Activated B cell treated with CpG ODN at 0.5 μM for 24 hours (primary cell): ENCODE measurements at regions of chr6 and their contacts with region 1.

Region 1: GRCh38 chr6:155530219-155530834 is 74.7 kb upstream of the NOX3 start:
- DNase-seq: no peak
- ATAC-seq: peak; percentile 37
- H3K4me3 Mint-ChIP-seq: no peak overlapping the region
- H3K27ac Mint-ChIP-seq: no peak overlapping the region
- H3K4me1 Mint-ChIP-seq: peaks cover 9% of the 10 kb centered on the region
- H3K27me3 Mint-ChIP-seq: no peaks in the 10 kb centered on the region
- CTCF ChIP-seq: no peak

Region 2: GRCh38 chr6:154868143-154868594 is 662.2 kb before region 1 on chr6:
- CTCF ChIA-PET with region 1: no interaction called
- POLR2A ChIA-PET with region 1: no interaction called
- intact Hi-C with region 1: loop called (anchors 5 kb)
- DNase-seq: no peak
- ATAC-seq: peak; percentile 28
- H3K4me3 Mint-ChIP-seq: no peak overlapping the region
- H3K27ac Mint-ChIP-seq: no peak overlapping the region
- H3K4me1 Mint-ChIP-seq: no peaks in the 10 kb centered on the region
- H3K27me3 Mint-ChIP-seq: no peaks in the 10 kb centered on the region
- CTCF ChIP-seq: peak; percentile 86

Region 3: DNA sequence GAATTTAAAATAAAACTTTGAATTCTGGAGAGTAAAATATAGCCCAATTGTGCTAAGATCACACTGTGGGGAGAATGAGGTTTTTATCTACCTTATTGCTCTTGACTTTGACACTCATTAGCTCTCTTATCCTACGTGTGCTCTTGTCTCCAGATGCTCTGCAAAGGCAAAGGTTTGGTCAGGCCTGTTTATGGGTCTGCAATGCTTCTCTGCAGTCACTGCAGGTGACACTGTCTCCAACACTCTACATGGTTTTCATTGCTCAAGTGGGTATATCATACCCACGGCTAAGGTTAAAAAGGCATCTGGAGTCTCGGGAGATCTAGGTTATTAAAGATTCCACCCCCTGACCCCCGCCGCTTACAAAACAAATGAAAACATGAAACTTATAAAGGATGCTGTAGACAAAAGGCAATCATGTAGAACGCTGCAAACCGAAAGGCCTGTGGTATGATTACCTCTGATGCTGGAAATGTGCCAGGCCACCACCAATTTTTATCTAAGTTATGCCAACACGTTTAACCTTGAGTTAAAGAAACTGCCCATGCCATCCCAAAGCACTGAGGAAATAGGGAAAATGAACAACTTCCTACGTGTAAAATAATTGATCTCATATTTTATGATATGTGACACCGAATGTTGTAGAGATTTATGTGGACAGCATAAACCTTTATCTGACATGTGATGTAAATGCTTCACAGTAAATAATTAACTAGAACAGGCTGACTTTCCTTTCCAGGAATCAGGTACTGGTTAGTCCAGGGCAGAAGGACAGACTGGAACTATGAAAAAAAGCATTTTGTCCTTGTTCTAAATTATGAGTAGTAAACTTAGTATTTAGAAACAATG is 163.5 kb after region 1 on chr6:
- CTCF ChIA-PET with region 1: no interaction called
- POLR2A ChIA-PET with region 1: no interaction called
- intact Hi-C with region 1: no loop called
- DNase-seq: no peak
- ATAC-seq: no peak
- H3K4me3 Mint-ChIP-seq: no peak overlapping the region
- H3K27ac Mint-ChIP-seq: no peak overlapping the region
- H3K4me1 Mint-ChIP-seq: no peaks in the 10 kb centered on the region
- H3K27me3 Mint-ChIP-seq: no peaks in the 10 kb centered on the region
- CTCF ChIP-seq: no peak